ENCODE measurements at regions of chr22 and their contacts with region 1.

Region 1: DNA sequence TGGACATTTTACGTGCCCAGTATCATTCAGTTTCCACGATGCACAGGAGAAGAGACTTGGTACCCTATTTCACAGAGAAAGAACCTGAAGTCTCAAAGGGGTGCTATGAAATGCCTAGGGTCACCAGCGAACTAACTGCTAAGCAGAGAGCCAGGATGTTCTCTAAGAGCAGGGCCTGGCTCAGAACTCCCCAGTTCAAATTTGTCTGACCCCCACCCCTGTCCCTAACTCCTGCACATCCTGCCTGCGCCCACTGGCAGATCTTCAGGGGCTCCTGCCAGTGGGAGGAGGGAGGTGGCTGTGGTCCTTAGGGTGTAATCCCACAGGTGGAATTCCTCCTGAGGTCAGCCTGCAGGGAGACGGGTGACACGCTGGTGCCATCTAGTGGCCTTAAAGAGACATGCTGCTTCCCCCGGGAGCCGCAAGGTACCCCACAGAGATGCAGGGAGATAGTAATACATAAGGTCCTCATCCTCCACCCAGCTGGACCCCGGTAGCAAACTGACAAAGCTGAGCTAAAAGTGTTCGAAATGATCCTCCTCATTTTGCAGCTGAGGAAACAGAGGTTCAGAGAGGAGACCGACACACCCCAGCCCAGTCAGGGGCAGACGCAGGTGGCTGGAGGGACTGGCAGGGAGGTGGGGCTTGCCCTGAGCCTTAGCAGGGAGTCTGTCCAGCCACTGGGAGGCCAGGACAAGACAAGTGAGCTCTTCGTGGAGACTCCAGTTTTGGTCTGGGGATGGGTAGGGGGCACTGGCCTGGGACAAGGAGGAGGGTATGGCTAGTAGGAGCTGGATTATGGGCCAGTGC is 34.1 kb downstream of the MB start:
- DNase-seq: peak; percentile 64 to 74
- H3K4me3 ChIP-seq: no peak overlapping the region
- H3K4me1 ChIP-seq: no peaks in the 10 kb centered on the region; the same call in 1 of the 2 replicates
- H3K27me3 ChIP-seq: no peaks in the 10 kb centered on the region; the same call in 1 of the 2 replicates

Region 2: GRCh38 chr22:35350539-35351503 is 232.2 kb before region 1 on chr22:
- in situ Hi-C with region 1: loop called (anchors 5 kb)
- DNase-seq: peak; percentile 84 to 96
- H3K4me3 ChIP-seq: peak overlapping the region; percentile 30
- H3K4me1 ChIP-seq: peaks cover 10% of the 10 kb centered on the region
- H3K27me3 ChIP-seq: no peaks in the 10 kb centered on the region

Region 3: DNA sequence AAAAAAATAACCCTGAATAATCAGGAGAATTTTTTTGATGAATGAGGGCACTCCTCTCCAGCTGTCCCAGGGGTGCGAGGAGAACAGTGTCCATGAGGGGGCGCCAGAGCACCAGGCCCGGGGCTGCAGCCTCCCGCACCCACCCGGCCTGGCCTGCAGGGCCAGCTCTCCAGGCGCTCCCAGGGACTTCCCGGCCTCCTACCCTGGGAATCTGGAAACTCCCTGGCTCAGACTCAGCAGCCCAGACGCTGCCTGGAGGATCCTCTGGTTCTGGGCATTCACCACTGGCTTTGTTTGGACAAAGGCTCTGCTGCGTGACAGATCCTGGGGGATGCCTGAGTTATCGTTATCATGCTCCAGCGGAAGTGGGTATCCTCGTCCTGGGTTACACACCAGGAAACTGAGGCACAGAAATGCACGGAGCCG is 152.2 kb before region 1 on chr22:
- in situ Hi-C with region 1: loop called (anchors 5 kb)
- DNase-seq: peak; percentile 34 to 88
- H3K4me3 ChIP-seq: no peak overlapping the region
- H3K4me1 ChIP-seq: peaks cover 5% of the 10 kb centered on the region
- H3K27me3 ChIP-seq: no peaks in the 10 kb centered on the region